Heart right ventricle (tissue), 16 donors: ENCODE measurements at regions of chr2 and their contacts with region 1.

Region 1: GRCh38 chr2:201496785-201497184 is 45.2 kb downstream of the STRADB start:
- DNase-seq: no peak
- ATAC-seq: no peak
- H3K4me3 ChIP-seq: no peak overlapping the region
- H3K27ac ChIP-seq: no peak overlapping the region
- H3K4me1 ChIP-seq: no peaks in the 10 kb centered on the region
- H3K27me3 ChIP-seq: no peaks in the 10 kb centered on the region
- CTCF ChIP-seq: no peak

Region 2: DNA sequence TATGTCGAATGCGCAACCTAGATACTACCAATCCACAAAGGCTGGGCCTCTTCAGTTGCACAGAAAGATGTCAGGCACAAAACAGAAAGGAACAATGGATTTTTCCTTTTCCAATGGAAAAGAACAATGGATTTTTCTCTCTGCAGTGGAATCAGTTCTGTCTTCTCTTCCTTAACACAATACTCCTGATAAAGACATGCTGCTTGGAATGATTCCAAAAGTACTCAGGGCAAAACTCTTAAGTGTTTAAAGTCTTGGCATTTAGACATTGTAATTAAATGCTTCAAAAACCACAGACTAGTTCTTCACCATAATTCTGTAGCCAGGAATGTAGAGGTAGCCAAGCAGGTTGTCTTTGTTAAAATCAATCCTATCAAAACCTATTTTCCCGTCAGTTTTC is 92.9 kb before region 1 on chr2:
- intact Hi-C with region 1: no loop called
- DNase-seq: no peak
- ATAC-seq: peak in 1 of 8 donors; percentile 6
- H3K4me3 ChIP-seq: peak overlapping the region in 1 of 10 donors; percentile 3
- H3K27ac ChIP-seq: peak overlapping the region in 8 of 10 donors; percentile 2 to 87 (median 44)
- H3K4me1 ChIP-seq: peaks cover 0 to 84% (median 57%) of the 10 kb centered on the region in 9 donors
- H3K27me3 ChIP-seq: no peaks in the 10 kb centered on the region
- CTCF ChIP-seq: no peak

Region 3: DNA sequence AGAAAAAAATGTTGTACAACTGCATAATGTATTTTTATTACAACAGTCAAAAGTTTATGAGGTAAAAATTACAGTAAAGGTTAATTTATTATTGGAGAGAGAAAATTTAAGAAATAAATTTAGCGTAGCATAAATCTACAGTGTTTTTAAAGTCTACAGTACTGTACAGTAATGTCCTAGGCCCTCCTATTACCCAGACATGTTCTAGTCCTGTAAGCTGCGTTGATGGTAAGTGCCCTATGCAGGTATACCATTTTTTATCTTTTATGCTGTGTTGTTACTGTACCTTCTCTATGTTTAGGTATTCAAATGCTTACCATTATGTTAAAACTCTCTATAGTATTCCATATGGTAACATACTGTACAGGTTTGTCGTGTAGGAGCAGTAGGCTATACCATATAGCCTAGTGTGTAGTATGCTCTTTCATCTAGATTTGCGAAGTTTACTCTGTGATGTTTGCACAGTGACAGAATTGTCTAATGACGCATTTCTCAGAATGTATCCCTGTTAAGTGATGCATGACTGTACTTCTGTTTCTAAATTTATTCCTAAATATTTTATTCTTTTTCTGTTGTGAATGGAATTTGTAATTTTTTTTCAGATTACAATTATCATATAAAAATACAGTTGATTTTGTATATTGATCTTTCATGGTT is 1855.9 kb after region 1 on chr2:
- intact Hi-C with region 1: loop called in 1 of 10 experiments (anchors 5 kb)
- DNase-seq: no peak
- ATAC-seq: peak in 1 of 8 donors; percentile 35
- H3K4me3 ChIP-seq: no peak overlapping the region
- H3K27ac ChIP-seq: peak overlapping the region in 1 of 10 donors; percentile 25
- H3K4me1 ChIP-seq: peaks cover 0 to 29% (median 10%) of the 10 kb centered on the region in 9 donors
- H3K27me3 ChIP-seq: no peaks in the 10 kb centered on the region
- CTCF ChIP-seq: no peak